ENCODE measurements at regions of chr6 and their contacts with region 1.

Region 1: GRCh38 chr6:158631678-158632537 is 12.6 kb downstream of the DYNLT1 start:
- DNase-seq: peak; percentile 97
- H3K4me3 ChIP-seq: peak overlapping the region in 1 of 3 experiments; percentile 25
- H3K27ac ChIP-seq: peak overlapping the region; percentile 90
- H3K4me1 ChIP-seq: peaks cover 27% of the 10 kb centered on the region
- H3K27me3 ChIP-seq: no peaks in the 10 kb centered on the region
- CTCF ChIP-seq: no peak
- POLR2A ChIP-seq: peak; percentile 45

Region 2: DNA sequence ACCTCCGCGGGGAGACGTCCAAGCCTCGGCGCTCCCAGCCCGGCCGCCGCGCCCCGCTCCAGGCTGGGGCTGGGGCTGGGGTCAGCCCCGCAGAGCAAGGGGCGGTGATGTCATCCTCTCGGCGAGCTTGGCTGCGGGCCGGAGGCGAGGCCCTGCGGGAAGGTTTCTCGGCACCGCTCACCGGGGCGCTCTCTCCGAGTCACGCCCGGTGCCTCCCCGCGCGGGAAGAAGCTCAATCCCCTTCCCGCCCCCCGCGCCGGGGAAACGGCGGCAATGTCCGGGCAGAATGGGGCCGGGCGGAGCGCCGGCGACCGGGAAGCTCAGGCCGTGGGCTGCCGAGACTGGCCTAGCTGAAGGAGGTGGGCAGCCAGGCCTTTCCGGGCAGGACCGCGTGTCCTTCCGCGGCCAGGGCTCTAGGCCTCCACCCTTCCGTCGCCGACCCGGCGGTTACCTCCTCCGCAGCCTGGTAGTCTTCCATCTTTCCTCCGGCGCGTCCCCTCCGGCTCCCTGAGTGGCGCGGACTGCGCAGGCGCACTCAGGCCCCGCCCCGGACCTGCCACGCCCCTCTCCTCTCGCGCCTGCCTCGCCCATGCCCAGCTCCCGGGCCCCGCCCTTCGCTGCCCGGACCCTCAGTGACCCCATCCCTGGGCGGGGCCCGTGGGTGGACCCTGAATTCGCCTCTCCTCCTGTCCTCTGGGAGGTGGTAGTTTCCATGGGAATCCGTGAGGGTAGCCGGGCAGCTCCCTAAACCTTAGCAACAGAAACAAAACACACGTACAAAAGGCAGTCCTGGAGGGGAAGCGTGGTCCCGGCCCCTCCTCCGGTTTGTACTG is 12.5 kb after region 1 on chr6 and contains the start of gene DYNLT1:
- CTCF ChIA-PET with region 1: interaction called, 3 read pairs
- POLR2A ChIA-PET with region 1: no interaction called
- dilution Hi-C with region 1: no loop called
- intact Hi-C with region 1: loop called (anchors 1 kb)
- DNase-seq: peak; percentile 92
- H3K4me3 ChIP-seq: peak within 1 kb of the TSS; percentile 74 to 92 (median 85)
- H3K27ac ChIP-seq: peak within 1 kb of the TSS; percentile 92
- H3K4me1 ChIP-seq: peaks cover 28% of the 10 kb centered on the region
- H3K27me3 ChIP-seq: no peaks in the 10 kb centered on the region
- CTCF ChIP-seq: no peak
- POLR2A ChIP-seq: peak; percentile 91
- total RNA-seq, gene DYNLT1: 162 TPM in 2 replicates